ENCODE measurements at regions of chr10 and their contacts with region 1.

Region 1: DNA sequence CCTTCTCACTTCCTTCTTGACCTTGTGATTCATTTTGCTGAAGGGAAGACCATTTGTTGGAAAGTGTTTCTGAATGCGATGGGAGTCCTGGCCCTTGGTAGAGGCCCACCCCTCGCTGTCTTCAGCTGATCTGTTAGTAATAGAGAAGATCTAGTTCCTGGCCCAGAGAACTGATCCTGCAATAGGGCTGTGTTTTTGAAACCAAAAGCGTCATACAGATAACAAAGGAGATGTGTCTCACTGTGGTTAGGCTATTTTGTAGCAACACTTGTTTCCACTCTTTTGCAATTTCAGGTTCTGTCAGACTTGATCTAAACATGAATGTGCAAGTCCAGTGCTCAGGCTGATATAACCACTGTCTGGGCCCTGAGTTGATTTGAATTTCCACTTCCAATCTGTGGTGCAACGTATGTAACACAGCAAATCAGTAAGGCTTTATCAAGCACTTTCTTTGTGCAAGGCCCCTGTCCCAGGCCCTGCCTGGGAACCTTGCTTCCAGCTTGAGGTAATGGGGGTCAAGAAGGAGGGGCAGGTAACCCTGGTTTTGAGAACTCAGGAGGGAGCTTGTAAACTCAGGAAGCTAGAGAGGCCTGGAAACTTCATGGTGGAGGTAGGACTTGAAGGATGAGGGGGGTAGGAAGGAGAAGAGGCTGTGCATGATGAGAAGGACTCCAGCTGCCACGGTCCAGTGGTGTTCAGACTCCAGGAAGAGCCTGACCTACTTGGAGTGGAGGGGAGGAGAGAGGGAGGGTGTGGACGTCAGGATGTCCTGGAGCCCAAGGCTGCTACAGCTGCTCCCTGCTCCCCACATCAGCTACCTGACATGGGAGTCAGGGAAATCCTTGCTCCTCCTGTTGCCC is 42.2 kb upstream of the SRGN start:
- DNase-seq: peak; percentile 53
- H3K4me3 Mint-ChIP-seq: peak overlapping the region; percentile 56
- H3K27ac Mint-ChIP-seq: peak overlapping the region; percentile 98
- H3K4me1 Mint-ChIP-seq: peaks cover 62% of the 10 kb centered on the region
- H3K27me3 Mint-ChIP-seq: no peaks in the 10 kb centered on the region

Region 2: GRCh38 chr10:69004821-69005220 is 40.9 kb before region 1 on chr10:
- CTCF ChIA-PET with region 1: interaction called, 6 read pairs
- POLR2A ChIA-PET with region 1: interaction called, 20 read pairs
- DNase-seq: no peak
- H3K4me3 Mint-ChIP-seq: no peak overlapping the region
- H3K27ac Mint-ChIP-seq: no peak overlapping the region
- H3K4me1 Mint-ChIP-seq: peaks cover 12% of the 10 kb centered on the region
- H3K27me3 Mint-ChIP-seq: no peaks in the 10 kb centered on the region

Region 3: DNA sequence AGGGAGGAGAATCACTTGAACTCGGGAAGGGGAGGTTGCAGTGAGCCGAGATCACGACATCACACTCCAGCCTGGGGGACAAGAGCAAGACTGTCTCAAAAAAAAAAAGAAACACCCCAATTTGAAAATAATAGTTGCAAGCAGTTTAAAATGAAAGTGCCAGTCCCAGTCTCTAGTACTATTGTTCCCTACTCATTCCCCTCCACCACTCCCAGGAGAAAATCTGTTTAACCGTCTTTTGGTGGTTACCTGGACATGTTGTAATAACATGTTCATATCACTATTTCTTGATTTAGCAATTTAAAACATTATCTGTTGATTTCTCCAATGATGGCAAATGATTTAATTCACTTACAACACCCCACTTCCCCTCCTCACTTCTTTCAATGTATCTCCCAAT is 12.4 kb before region 1 on chr10:
- CTCF ChIA-PET with region 1: interaction called, 4 read pairs
- POLR2A ChIA-PET with region 1: interaction called, 10 read pairs
- DNase-seq: no peak
- H3K4me3 Mint-ChIP-seq: no peak overlapping the region
- H3K27ac Mint-ChIP-seq: no peak overlapping the region
- H3K4me1 Mint-ChIP-seq: peaks cover 3% of the 10 kb centered on the region
- H3K27me3 Mint-ChIP-seq: no peaks in the 10 kb centered on the region

Region 4: GRCh38 chr10:69061305-69062161 is 15.9 kb after region 1 on chr10:
- CTCF ChIA-PET with region 1: interaction called, 3 read pairs
- POLR2A ChIA-PET with region 1: interaction called, 74 read pairs
- DNase-seq: peak; percentile 53
- H3K4me3 Mint-ChIP-seq: peak overlapping the region; percentile 49
- H3K27ac Mint-ChIP-seq: peak overlapping the region; percentile 59
- H3K4me1 Mint-ChIP-seq: peaks cover 64% of the 10 kb centered on the region
- H3K27me3 Mint-ChIP-seq: no peaks in the 10 kb centered on the region

Region 5: GRCh38 chr10:69087590-69088470 is 42.2 kb after region 1 on chr10 and contains the start of gene SRGN:
- CTCF ChIA-PET with region 1: interaction called, 26 read pairs
- POLR2A ChIA-PET with region 1: interaction called, 214 read pairs
- DNase-seq: peak; percentile 85
- H3K4me3 Mint-ChIP-seq: peak within 1 kb of the TSS; percentile 89
- H3K27ac Mint-ChIP-seq: peak within 1 kb of the TSS; percentile 95
- H3K4me1 Mint-ChIP-seq: peaks cover 51% of the 10 kb centered on the region
- H3K27me3 Mint-ChIP-seq: no peaks in the 10 kb centered on the region
- total RNA-seq, gene SRGN: 468 to 474 TPM

Region 6: GRCh38 chr10:69092959-69093850 is 47.5 kb after region 1 on chr10:
- CTCF ChIA-PET with region 1: interaction called, 26 read pairs
- POLR2A ChIA-PET with region 1: interaction called, 214 read pairs
- DNase-seq: peak; percentile 88
- H3K4me3 Mint-ChIP-seq: peak overlapping the region; percentile 53
- H3K27ac Mint-ChIP-seq: peak overlapping the region; percentile 72
- H3K4me1 Mint-ChIP-seq: peaks cover 63% of the 10 kb centered on the region
- H3K27me3 Mint-ChIP-seq: no peaks in the 10 kb centered on the region

Region 7: GRCh38 chr10:69123747-69124562 is 78.3 kb after region 1 on chr10 and contains the start of gene VPS26A:
- CTCF ChIA-PET with region 1: interaction called, 3 read pairs
- POLR2A ChIA-PET with region 1: interaction called, 10 read pairs
- DNase-seq: peak; percentile 99
- H3K4me3 Mint-ChIP-seq: peak within 1 kb of the TSS; percentile 92
- H3K27ac Mint-ChIP-seq: peak within 1 kb of the TSS; percentile 88
- H3K4me1 Mint-ChIP-seq: peaks cover 37% of the 10 kb centered on the region
- H3K27me3 Mint-ChIP-seq: peaks cover 3% of the 10 kb centered on the region
- total RNA-seq, gene VPS26A: 57.1 to 63.4 TPM